PC-9 (cell line): ENCODE measurements at regions of chr4 and their contacts with region 1.

Region 1: GRCh38 chr4:141636082-141636770 is at the start of gene IL15:
- DNase-seq: peak; percentile 68 to 81
- H3K4me3 ChIP-seq: peak within 1 kb of the TSS; percentile 80
- H3K27ac ChIP-seq: peak within 1 kb of the TSS; percentile 43
- H3K4me1 ChIP-seq: peaks cover 16% of the 10 kb centered on the region
- H3K27me3 ChIP-seq: no peaks in the 10 kb centered on the region
- CTCF ChIP-seq: no peak
- total RNA-seq, gene IL15: 4.2 and 4.8 TPM in 2 replicates

Region 2: GRCh38 chr4:141170671-141171070 is 465.6 kb before region 1 on chr4:
- CTCF ChIA-PET with region 1: no interaction called
- POLR2A ChIA-PET with region 1: no interaction called
- intact Hi-C with region 1: no loop called
- DNase-seq: no peak
- H3K4me3 ChIP-seq: no peak overlapping the region
- H3K27ac ChIP-seq: no peak overlapping the region
- H3K4me1 ChIP-seq: no peaks in the 10 kb centered on the region
- H3K27me3 ChIP-seq: no peaks in the 10 kb centered on the region
- CTCF ChIP-seq: no peak

Region 3: GRCh38 chr4:141375855-141376254 is 260.4 kb before region 1 on chr4:
- CTCF ChIA-PET with region 1: no interaction called
- POLR2A ChIA-PET with region 1: no interaction called
- intact Hi-C with region 1: loop called (anchors 5 kb)
- DNase-seq: peak; percentile 64 to 68
- H3K4me3 ChIP-seq: no peak overlapping the region
- H3K27ac ChIP-seq: no peak overlapping the region
- H3K4me1 ChIP-seq: no peaks in the 10 kb centered on the region
- H3K27me3 ChIP-seq: no peaks in the 10 kb centered on the region
- CTCF ChIP-seq: peak; percentile 55

Region 4: GRCh38 chr4:141668200-141668910 is 32.1 kb after region 1 on chr4:
- CTCF ChIA-PET with region 1: no interaction called
- POLR2A ChIA-PET with region 1: no interaction called
- intact Hi-C with region 1: no loop called
- DNase-seq: no peak
- H3K4me3 ChIP-seq: no peak overlapping the region
- H3K27ac ChIP-seq: no peak overlapping the region
- H3K4me1 ChIP-seq: no peaks in the 10 kb centered on the region
- H3K27me3 ChIP-seq: no peaks in the 10 kb centered on the region
- CTCF ChIP-seq: no peak